Dorsolateral prefrontal cortex (tissue), 120 donors: ENCODE measurements at regions of chr17 and their contacts with region 1.

Region 1: DNA sequence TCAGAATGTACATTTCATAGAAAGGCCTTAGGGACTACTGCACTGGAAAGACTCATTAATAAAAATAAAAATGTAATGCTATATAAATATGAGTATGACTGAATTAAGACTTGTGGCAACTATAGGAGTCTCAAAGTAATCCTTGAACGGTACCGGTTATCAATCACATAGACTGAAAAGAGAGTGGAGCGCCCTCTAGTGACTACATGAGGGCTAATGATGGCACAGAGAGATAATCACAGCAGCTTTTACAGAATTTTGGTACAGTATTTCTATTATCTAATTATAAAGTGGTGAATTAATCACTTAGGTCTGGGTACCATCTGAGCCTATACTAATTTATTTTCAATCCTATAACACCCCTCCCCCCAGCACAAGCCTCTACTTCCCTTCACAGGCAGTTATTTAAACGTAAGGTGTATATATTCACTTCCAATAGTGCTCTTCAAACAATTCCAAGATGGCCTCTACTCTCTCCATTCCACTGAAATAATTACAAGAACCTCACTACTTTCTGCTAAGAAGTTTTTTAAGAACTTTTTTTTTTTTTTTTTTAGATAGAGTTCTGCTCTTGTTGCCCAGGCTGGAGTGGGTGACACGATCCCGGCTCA is 40.7 kb upstream of the ANKFY1 start:
- DNase-seq: peak in 3 of 10 donors; percentile 37 to 71 (median 50)
- H3K4me3 ChIP-seq: no peak overlapping the region
- H3K27ac ChIP-seq: peak overlapping the region in 27 of 59 donors; percentile 2 to 69 (median 27)
- H3K27me3 ChIP-seq: no peaks in the 10 kb centered on the region
- CTCF ChIP-seq: peak; percentile 50 to 91 (median 72)

Region 2: GRCh38 chr17:4263282-4264215 is 41.0 kb before region 1 on chr17 and contains the start of gene ANKFY1:
- intact Hi-C with region 1: loop called in 1 of 2 experiments (anchors 2 kb)
- DNase-seq: peak; percentile 91 to 97 (median 96)
- H3K4me3 ChIP-seq: peak within 1 kb of the TSS; percentile 63 to 99 (median 88)
- H3K27ac ChIP-seq: peak within 1 kb of the TSS in 58 of 59 donors; percentile 1 to 95 (median 82)
- H3K27me3 ChIP-seq: no peaks in the 10 kb centered on the region
- CTCF ChIP-seq: peak in 49 of 56 donors; percentile 5 to 62 (median 37)
- total RNA-seq, gene ANKFY1: 46.8 to 109 (median 81.7) TPM

Region 3: DNA sequence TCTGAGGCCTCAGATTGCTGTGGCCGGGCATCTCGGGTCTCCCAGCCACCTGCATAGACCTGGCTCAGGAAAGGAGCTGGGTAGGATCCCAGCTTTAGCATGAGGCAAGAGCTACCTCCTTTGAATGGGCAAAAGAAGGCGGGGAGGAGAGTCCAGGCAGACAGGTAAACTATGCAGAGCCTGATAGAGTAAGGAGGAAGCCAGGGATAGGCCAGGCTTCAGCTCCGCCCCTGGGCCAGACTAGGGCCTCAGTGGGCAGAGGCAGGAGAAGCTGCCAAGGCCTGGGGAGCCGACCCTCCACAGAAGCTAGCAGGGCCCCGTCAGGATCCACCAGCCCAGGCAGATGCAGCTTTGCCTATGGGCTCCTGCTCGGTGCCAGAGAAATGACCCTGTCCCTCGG is 84.6 kb after region 1 on chr17:
- intact Hi-C with region 1: no loop called
- DNase-seq: no peak
- H3K4me3 ChIP-seq: no peak overlapping the region
- H3K27ac ChIP-seq: no peak overlapping the region
- H3K27me3 ChIP-seq: no peaks in the 10 kb centered on the region
- CTCF ChIP-seq: no peak